ENCODE measurements at regions of chr18 and their contacts with region 1.

Region 1: DNA sequence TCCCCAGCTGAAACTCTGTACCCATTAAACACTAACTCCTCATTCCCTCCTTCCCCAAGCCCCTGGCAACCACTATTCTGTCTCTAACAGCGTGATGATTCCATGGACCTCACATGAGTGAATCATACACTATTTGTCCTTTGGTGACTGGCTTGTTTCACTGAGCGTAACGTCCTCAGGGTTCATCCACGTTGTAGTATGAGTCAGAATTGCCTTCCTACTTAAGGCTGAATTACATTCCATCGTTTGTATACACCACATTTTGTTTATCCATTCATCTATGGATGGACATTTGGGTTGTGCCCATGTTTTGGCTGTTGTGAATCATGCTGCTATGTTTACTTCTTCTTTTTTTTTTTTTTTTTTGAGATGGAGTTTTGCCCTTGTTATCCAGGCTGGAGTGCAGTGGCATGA is 19.6 kb upstream of the CABLES1 start:
- DNase-seq: peak; percentile 96
- ATAC-seq: peak; percentile 93
- H3K4me3 ChIP-seq: no peak overlapping the region
- H3K27ac ChIP-seq: peak overlapping the region; percentile 82
- H3K4me1 ChIP-seq: peaks cover 32% of the 10 kb centered on the region
- H3K27me3 ChIP-seq: no peaks in the 10 kb centered on the region
- CTCF ChIP-seq: no peak

Region 2: GRCh38 chr18:23087352-23087751 is 28.3 kb before region 1 on chr18:
- CTCF ChIA-PET with region 1: no interaction called
- POLR2A ChIA-PET with region 1: interaction called, 16 read pairs
- in situ Hi-C with region 1: no loop called
- intact Hi-C with region 1: no loop called
- DNase-seq: no peak
- ATAC-seq: no peak
- H3K4me3 ChIP-seq: no peak overlapping the region
- H3K27ac ChIP-seq: 0 out of 2 replicates have a peak overlapping the region, but pooled peaks have one; percentile 2
- H3K4me1 ChIP-seq: 0 out of 2 replicates have a peak, but pooled peaks cover 3% of the 10 kb centered on the region
- H3K27me3 ChIP-seq: no peaks in the 10 kb centered on the region
- CTCF ChIP-seq: no peak

Region 3: DNA sequence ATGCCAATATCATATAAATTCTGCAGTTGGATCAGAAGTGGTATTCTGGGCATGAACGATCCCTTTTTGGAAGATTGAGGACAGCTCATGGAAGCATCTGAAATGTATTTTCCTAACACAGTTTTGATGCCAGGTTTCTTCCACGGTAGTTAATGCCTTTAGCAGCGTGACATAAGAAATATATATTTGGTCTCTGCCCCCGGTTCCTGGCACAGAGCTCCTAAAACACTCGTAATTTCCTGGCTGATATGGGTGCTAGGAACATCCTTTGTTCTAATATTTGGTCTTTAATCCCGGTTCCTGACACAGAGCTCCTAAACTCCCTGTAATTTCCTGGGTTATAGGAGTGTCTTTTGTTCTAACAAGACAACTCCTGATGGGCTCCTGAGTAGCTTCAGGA is 11.4 kb after region 1 on chr18:
- CTCF ChIA-PET with region 1: no interaction called
- POLR2A ChIA-PET with region 1: no interaction called
- in situ Hi-C with region 1: no loop called
- intact Hi-C with region 1: no loop called
- DNase-seq: no peak
- ATAC-seq: no peak
- H3K4me3 ChIP-seq: no peak overlapping the region
- H3K27ac ChIP-seq: peak overlapping the region; percentile 62
- H3K4me1 ChIP-seq: peaks cover 35% of the 10 kb centered on the region
- H3K27me3 ChIP-seq: no peaks in the 10 kb centered on the region
- CTCF ChIP-seq: no peak

Region 4: DNA sequence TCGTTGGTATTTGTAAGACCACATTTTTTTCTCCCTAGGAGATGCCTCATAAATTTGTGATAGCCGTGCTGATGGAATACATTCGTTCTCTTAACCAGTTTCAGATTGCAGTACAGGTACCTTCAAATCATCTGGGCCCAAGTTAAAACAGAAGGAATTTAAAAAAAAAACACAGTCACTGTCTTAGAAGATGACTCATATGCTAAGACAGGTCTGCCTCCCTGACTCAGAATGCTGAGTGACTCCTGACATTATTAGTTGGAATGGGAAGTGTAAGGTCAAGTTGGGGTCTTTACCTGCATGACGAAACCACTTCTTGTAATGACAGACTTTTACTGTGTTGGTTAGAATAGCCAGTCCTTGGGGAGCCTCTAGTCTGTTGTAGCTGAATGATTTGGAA is 413.9 kb after region 1 on chr18:
- CTCF ChIA-PET with region 1: no interaction called
- POLR2A ChIA-PET with region 1: no interaction called
- in situ Hi-C with region 1: no loop called
- intact Hi-C with region 1: no loop called
- DNase-seq: peak; percentile 33
- ATAC-seq: peak; percentile 28; the same call in 1 of the 2 replicates
- H3K4me3 ChIP-seq: no peak overlapping the region
- H3K27ac ChIP-seq: no peak overlapping the region; the same call in 1 of the 2 replicates
- H3K4me1 ChIP-seq: peaks cover 5% of the 10 kb centered on the region; the same call in 1 of the 2 replicates
- H3K27me3 ChIP-seq: no peaks in the 10 kb centered on the region
- CTCF ChIP-seq: no peak

Measured in Panc1 (cell line).